Endothelial cell of umbilical vein (primary cell): ENCODE measurements at regions of chr1 and their contacts with region 1.

Region 1: GRCh38 chr1:18902523-18903290 is at the start of gene ALDH4A1:
- DNase-seq: peak; percentile 98
- H3K4me3 ChIP-seq: peak within 1 kb of the TSS; percentile 82 to 90 (median 83)
- H3K27ac ChIP-seq: peak within 1 kb of the TSS; percentile 88
- H3K4me1 ChIP-seq: peaks cover 22% of the 10 kb centered on the region
- H3K27me3 ChIP-seq: no peaks in the 10 kb centered on the region
- CTCF ChIP-seq: peak in 1 of 2 donors; percentile 0
- POLR2A ChIP-seq: peak; percentile 49
- total RNA-seq, gene ALDH4A1: 17.4 and 18.6 TPM in 2 replicates

Region 2: DNA sequence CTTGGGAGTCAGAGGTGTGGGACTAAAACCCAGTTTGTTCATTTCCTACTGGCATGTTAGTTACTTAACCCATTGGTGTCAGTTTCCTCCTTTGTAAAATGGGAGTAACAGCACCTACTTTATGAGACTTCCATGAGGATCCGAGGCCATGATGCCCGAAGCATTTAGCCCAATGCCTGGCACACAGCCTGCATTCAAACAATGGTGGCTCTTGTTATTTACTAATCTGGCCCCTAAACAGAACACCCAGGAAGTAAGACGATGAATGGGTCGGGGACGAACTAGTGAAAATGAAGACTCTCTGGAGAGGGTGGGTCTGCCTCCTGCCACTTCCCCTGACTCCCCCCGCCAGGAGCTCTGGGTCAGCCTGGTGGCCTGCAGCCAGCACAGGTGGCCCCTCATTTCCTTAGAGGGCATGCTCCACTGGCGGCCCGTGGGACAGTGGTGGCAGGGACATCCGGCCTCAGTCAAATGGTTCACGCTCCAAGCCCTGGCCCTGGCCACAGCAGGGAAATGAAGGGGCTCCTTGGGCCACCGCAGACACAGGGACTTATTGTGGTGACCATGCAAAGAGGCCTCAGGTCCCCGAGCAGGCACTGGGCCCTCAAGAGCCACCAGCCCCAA is 33.8 kb before region 1 on chr1:
- CTCF ChIA-PET with region 1: no interaction called
- POLR2A ChIA-PET with region 1: no interaction called
- dilution Hi-C with region 1: no loop called
- intact Hi-C with region 1: no loop called
- DNase-seq: no peak
- H3K4me3 ChIP-seq: no peak overlapping the region
- H3K27ac ChIP-seq: no peak overlapping the region
- H3K4me1 ChIP-seq: no peaks in the 10 kb centered on the region
- H3K27me3 ChIP-seq: peaks cover 0 to 3% of the 10 kb centered on the region in 2 experiments
- CTCF ChIP-seq: no peak
- POLR2A ChIP-seq: no peak

Region 3: GRCh38 chr1:18883636-18884418 is 18.9 kb before region 1 on chr1:
- CTCF ChIA-PET with region 1: interaction called, 37 read pairs
- POLR2A ChIA-PET with region 1: no interaction called
- dilution Hi-C with region 1: no loop called
- intact Hi-C with region 1: loop called (anchors 1 kb)
- DNase-seq: peak; percentile 78
- H3K4me3 ChIP-seq: no peak overlapping the region
- H3K27ac ChIP-seq: no peak overlapping the region
- H3K4me1 ChIP-seq: no peaks in the 10 kb centered on the region
- H3K27me3 ChIP-seq: no peaks in the 10 kb centered on the region
- CTCF ChIP-seq: peak; percentile 81 to 95
- POLR2A ChIP-seq: no peak

Region 4: GRCh38 chr1:18949686-18950400 is 47.1 kb after region 1 on chr1:
- CTCF ChIA-PET with region 1: interaction called, 50 read pairs
- POLR2A ChIA-PET with region 1: interaction called, 7 read pairs
- dilution Hi-C with region 1: no loop called
- intact Hi-C with region 1: no loop called
- DNase-seq: peak; percentile 73
- H3K4me3 ChIP-seq: peak overlapping the region in 1 of 3 experiments; percentile 4
- H3K27ac ChIP-seq: peak overlapping the region; percentile 78
- H3K4me1 ChIP-seq: peaks cover 53% of the 10 kb centered on the region
- H3K27me3 ChIP-seq: no peaks in the 10 kb centered on the region
- CTCF ChIP-seq: peak in 1 of 2 donors; percentile 23
- POLR2A ChIP-seq: no peak

Region 5: DNA sequence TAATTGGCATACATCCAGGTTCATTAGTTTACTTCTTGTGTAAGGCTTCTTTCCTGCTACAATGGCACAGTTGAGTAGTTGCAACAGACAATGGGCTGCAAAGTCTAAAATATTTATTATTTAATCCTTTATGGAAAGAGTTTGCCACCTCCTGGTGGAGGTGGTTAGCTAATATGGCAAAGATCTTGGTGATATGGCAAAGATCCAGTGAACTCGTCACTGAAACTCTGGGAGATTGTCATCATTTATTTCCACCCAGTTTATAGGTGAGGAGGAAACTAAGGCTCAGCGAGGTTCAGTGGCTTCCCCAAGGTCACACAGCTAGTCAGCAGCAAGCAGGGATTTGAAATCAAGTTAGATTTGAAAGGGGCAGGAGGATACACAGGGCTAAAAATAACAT is 69.8 kb after region 1 on chr1:
- CTCF ChIA-PET with region 1: interaction called, 82 read pairs
- POLR2A ChIA-PET with region 1: interaction called, 7 read pairs
- dilution Hi-C with region 1: no loop called
- intact Hi-C with region 1: loop called (anchors 1 kb)
- DNase-seq: peak; percentile 60
- H3K4me3 ChIP-seq: no peak overlapping the region
- H3K27ac ChIP-seq: peak overlapping the region; percentile 19
- H3K4me1 ChIP-seq: peaks cover 15% of the 10 kb centered on the region
- H3K27me3 ChIP-seq: no peaks in the 10 kb centered on the region
- CTCF ChIP-seq: peak in 1 of 2 donors; percentile 21
- POLR2A ChIP-seq: no peak

Region 6: GRCh38 chr1:19081218-19081893 is 178.6 kb after region 1 on chr1:
- CTCF ChIA-PET with region 1: interaction called, 23 read pairs
- POLR2A ChIA-PET with region 1: interaction called, 3 read pairs
- dilution Hi-C with region 1: no loop called
- intact Hi-C with region 1: loop called (anchors 1 kb)
- DNase-seq: peak; percentile 52
- H3K4me3 ChIP-seq: no peak overlapping the region
- H3K27ac ChIP-seq: peak overlapping the region; percentile 84
- H3K4me1 ChIP-seq: peaks cover 42% of the 10 kb centered on the region
- H3K27me3 ChIP-seq: no peaks in the 10 kb centered on the region
- CTCF ChIP-seq: no peak
- POLR2A ChIP-seq: no peak

Region 7: GRCh38 chr1:19113697-19114092 is 211.0 kb after region 1 on chr1:
- CTCF ChIA-PET with region 1: interaction called, 23 read pairs
- POLR2A ChIA-PET with region 1: no interaction called
- dilution Hi-C with region 1: no loop called
- intact Hi-C with region 1: no loop called
- DNase-seq: peak; percentile 34
- H3K4me3 ChIP-seq: no peak overlapping the region
- H3K27ac ChIP-seq: no peak overlapping the region
- H3K4me1 ChIP-seq: no peaks in the 10 kb centered on the region
- H3K27me3 ChIP-seq: no peaks in the 10 kb centered on the region
- CTCF ChIP-seq: peak; percentile 42 to 60
- POLR2A ChIP-seq: no peak